CD8-positive, alpha-beta T cell (primary cell): ENCODE measurements at regions of chr7 and their contacts with region 1.

Region 1: DNA sequence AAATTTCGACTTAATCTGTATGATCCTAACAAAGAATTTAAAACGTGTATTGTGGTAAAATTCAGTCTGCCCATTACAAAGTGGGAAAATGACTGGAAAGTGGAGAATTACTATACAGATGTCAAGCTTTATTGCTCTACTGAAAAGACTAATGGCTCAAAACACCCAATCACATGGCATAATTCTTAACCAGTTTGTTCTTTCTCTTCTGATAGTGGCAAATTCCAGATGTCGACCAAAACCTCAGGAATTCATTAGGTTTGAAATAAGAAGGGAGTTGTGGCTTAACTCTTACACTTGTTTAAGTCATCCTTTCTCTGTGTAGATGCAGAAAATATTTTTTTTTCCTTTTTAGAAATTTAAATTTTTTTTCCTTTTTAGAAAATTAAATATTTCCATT is 1254.9 kb upstream of the LRRN3 start:
- DNase-seq: no peak
- ATAC-seq: no peak
- H3K4me3 ChIP-seq: no peak overlapping the region
- H3K4me3 Mint-ChIP-seq: no peak overlapping the region
- H3K27ac ChIP-seq: no peak overlapping the region
- H3K27ac Mint-ChIP-seq: no peak overlapping the region
- H3K4me1 ChIP-seq: no peaks in the 10 kb centered on the region
- H3K4me1 Mint-ChIP-seq: no peaks in the 10 kb centered on the region
- H3K27me3 ChIP-seq: no peaks in the 10 kb centered on the region
- H3K27me3 Mint-ChIP-seq: no peaks in the 10 kb centered on the region
- CTCF ChIP-seq: no peak

Region 2: GRCh38 chr7:108284349-108285002 is 1551.5 kb before region 1 on chr7:
- CTCF ChIA-PET with region 1: no interaction called
- POLR2A ChIA-PET with region 1: no interaction called
- intact Hi-C with region 1: loop called in 1 of 2 experiments (anchors 10 kb)
- DNase-seq: no peak
- ATAC-seq: no peak
- H3K4me3 ChIP-seq: no peak overlapping the region
- H3K4me3 Mint-ChIP-seq: no peak overlapping the region
- H3K27ac ChIP-seq: no peak overlapping the region
- H3K27ac Mint-ChIP-seq: no peak overlapping the region
- H3K4me1 ChIP-seq: peaks cover 7% of the 10 kb centered on the region
- H3K4me1 Mint-ChIP-seq: peaks cover 28% of the 10 kb centered on the region
- H3K27me3 ChIP-seq: no peaks in the 10 kb centered on the region
- H3K27me3 Mint-ChIP-seq: no peaks in the 10 kb centered on the region
- CTCF ChIP-seq: no peak

Region 3: GRCh38 chr7:109864230-109864629 is 28.2 kb after region 1 on chr7:
- CTCF ChIA-PET with region 1: no interaction called
- POLR2A ChIA-PET with region 1: no interaction called
- intact Hi-C with region 1: no loop called
- DNase-seq: no peak
- ATAC-seq: no peak
- H3K4me3 ChIP-seq: no peak overlapping the region
- H3K4me3 Mint-ChIP-seq: no peak overlapping the region
- H3K27ac ChIP-seq: no peak overlapping the region
- H3K27ac Mint-ChIP-seq: no peak overlapping the region
- H3K4me1 ChIP-seq: no peaks in the 10 kb centered on the region
- H3K4me1 Mint-ChIP-seq: no peaks in the 10 kb centered on the region
- H3K27me3 ChIP-seq: no peaks in the 10 kb centered on the region
- H3K27me3 Mint-ChIP-seq: no peaks in the 10 kb centered on the region
- CTCF ChIP-seq: no peak